ENCODE measurements at regions of chr2 and their contacts with region 1.

Region 1: GRCh38 chr2:234308813-234309195 is 188.1 kb downstream of the ARL4C start:
- DNase-seq: peak; percentile 91
- ATAC-seq: peak; percentile 92
- H3K4me3 ChIP-seq: no peak overlapping the region
- H3K4me3 Mint-ChIP-seq: peak overlapping the region; percentile 44
- H3K27ac ChIP-seq: no peak overlapping the region
- H3K27ac Mint-ChIP-seq: peak overlapping the region; percentile 26
- H3K4me1 ChIP-seq: peaks cover 24 to 26% of the 10 kb centered on the region in 2 donors
- H3K4me1 Mint-ChIP-seq: peaks cover 32% of the 10 kb centered on the region
- H3K27me3 ChIP-seq: peaks cover 0 to 39% (median 8%) of the 10 kb centered on the region in 4 experiments
- H3K27me3 Mint-ChIP-seq: peaks cover 32% of the 10 kb centered on the region
- CTCF ChIP-seq: no peak

Region 2: DNA sequence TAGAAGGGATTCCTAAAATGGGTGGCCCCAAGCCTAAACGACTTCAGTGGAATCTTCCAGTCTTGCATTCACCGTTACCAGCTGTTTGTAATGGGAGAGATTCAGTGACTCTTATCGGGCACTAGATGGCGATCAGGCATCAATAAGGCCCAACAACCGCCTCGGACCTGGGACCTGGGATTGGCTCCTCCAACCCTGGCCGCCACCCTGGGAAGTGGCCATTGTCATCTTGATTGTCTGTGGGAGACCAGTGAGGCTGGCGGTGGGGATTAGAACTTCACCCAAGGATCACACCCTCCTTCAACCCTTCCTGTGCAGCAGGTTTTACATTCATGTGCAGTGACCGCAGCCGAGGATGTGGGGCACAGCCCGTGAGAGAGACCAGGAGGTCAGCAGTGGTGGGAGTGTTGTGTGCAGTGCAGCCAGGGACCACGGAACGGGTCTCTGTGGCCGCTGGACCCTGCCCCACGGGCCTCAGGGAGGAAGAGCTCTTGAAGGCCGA is 173.0 kb before region 1 on chr2:
- CTCF ChIA-PET with region 1: interaction called, 6 read pairs
- POLR2A ChIA-PET with region 1: no interaction called
- intact Hi-C with region 1: loop called (anchors 2 kb)
- DNase-seq: peak; percentile 75
- ATAC-seq: peak; percentile 53
- H3K4me3 ChIP-seq: no peak overlapping the region
- H3K4me3 Mint-ChIP-seq: no peak overlapping the region
- H3K27ac ChIP-seq: no peak overlapping the region
- H3K27ac Mint-ChIP-seq: no peak overlapping the region
- H3K4me1 ChIP-seq: peaks cover 4 to 11% of the 10 kb centered on the region in 2 donors
- H3K4me1 Mint-ChIP-seq: peaks cover 15% of the 10 kb centered on the region
- H3K27me3 ChIP-seq: peaks cover 0 to 41% (median 17%) of the 10 kb centered on the region in 4 experiments
- H3K27me3 Mint-ChIP-seq: peaks cover 49% of the 10 kb centered on the region
- CTCF ChIP-seq: peak; percentile 86

Region 3: DNA sequence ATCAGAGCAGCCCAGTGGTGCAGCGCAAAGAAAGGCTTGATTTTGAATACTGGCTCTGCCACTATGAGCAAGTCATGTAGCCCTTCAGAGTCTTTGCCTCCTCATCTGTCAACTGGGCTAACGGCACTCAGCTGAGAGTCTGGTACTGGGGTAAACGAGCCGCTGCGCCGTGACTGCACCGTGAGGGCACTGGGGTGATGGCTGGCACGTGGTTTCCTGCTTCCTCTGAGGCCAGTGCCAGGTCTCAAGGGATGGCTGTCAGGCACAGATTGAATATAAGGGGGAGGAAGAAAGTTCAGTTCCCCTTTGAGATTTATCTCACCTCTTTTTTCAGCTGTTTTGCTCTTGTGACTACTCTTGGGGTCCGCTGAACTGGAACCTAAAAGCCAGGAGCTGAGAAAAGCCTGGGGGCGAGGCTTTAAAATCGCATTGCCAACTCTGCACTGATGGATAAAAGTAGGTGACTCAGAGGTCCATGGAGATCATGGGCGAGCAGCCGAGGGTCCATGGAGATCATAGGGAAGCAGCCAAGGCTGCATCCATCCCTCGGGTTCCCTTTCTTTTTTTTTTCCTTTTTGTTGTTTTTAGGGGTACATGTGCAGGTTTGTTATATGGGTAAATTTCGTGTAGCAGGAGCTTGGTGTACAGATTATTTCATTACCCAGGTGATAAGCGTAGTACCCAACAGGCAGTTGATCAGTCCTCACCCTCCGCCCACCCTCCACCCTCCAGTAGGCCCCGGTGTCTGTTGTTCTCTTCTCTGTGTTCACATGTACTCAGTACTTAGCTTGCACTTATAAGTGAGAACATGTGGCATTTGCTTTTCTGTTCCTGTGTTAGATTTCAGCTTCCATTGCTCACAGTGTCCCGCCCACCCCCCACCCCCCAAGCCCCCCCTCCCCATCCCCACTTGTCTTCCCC is 144.1 kb before region 1 on chr2:
- CTCF ChIA-PET with region 1: no interaction called
- POLR2A ChIA-PET with region 1: no interaction called
- intact Hi-C with region 1: loop called (anchors 1 kb)
- DNase-seq: peak; percentile 94
- ATAC-seq: peak; percentile 96
- H3K4me3 ChIP-seq: peak overlapping the region in 2 of 5 experiments; percentile 11 to 40
- H3K4me3 Mint-ChIP-seq: peak overlapping the region; percentile 71
- H3K27ac ChIP-seq: peak overlapping the region; percentile 87 to 88
- H3K27ac Mint-ChIP-seq: peak overlapping the region; percentile 89
- H3K4me1 ChIP-seq: peaks cover 45 to 54% of the 10 kb centered on the region in 2 donors
- H3K4me1 Mint-ChIP-seq: peaks cover 55% of the 10 kb centered on the region
- H3K27me3 ChIP-seq: peaks cover 0 to 8% (median 2%) of the 10 kb centered on the region in 4 experiments
- H3K27me3 Mint-ChIP-seq: peaks cover 9% of the 10 kb centered on the region
- CTCF ChIP-seq: no peak

Region 4: DNA sequence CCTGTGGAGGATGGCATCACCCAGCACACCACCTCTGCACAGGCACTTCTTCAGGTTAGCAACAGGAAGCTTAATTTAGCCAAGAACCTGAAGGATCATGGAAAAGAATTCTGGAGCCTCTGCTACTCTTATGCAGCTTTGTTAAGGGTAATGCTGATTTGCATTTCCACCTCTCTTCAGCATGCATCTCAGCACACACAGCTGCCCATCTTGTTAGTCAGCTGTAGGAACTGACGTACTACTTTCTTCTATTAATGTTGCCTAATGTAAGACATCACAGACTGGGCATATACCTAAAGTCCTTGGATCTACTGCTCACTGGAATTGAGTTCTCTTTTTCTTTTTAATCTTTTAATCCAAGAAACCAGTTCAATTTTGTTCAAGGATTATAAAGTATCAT is 77.3 kb before region 1 on chr2:
- CTCF ChIA-PET with region 1: no interaction called
- POLR2A ChIA-PET with region 1: no interaction called
- intact Hi-C with region 1: no loop called
- DNase-seq: no peak
- ATAC-seq: no peak
- H3K4me3 ChIP-seq: no peak overlapping the region
- H3K4me3 Mint-ChIP-seq: no peak overlapping the region
- H3K27ac ChIP-seq: no peak overlapping the region
- H3K27ac Mint-ChIP-seq: no peak overlapping the region
- H3K4me1 ChIP-seq: no peaks in the 10 kb centered on the region
- H3K4me1 Mint-ChIP-seq: no peaks in the 10 kb centered on the region
- H3K27me3 ChIP-seq: peaks cover 0 to 12% (median 0%) of the 10 kb centered on the region in 4 experiments
- H3K27me3 Mint-ChIP-seq: peaks cover 21% of the 10 kb centered on the region
- CTCF ChIP-seq: no peak

Region 5: GRCh38 chr2:234278556-234279255 is 30.1 kb before region 1 on chr2:
- CTCF ChIA-PET with region 1: no interaction called
- POLR2A ChIA-PET with region 1: no interaction called
- intact Hi-C with region 1: no loop called
- DNase-seq: no peak
- ATAC-seq: no peak
- H3K4me3 ChIP-seq: no peak overlapping the region
- H3K4me3 Mint-ChIP-seq: no peak overlapping the region
- H3K27ac ChIP-seq: no peak overlapping the region
- H3K27ac Mint-ChIP-seq: peak overlapping the region; percentile 21
- H3K4me1 ChIP-seq: no peaks in the 10 kb centered on the region
- H3K4me1 Mint-ChIP-seq: peaks cover 3% of the 10 kb centered on the region
- H3K27me3 ChIP-seq: peaks cover 0 to 28% (median 3%) of the 10 kb centered on the region in 4 experiments
- H3K27me3 Mint-ChIP-seq: peaks cover 54% of the 10 kb centered on the region
- CTCF ChIP-seq: no peak

Region 6: GRCh38 chr2:234425619-234426603 is 117.1 kb after region 1 on chr2:
- CTCF ChIA-PET with region 1: no interaction called
- POLR2A ChIA-PET with region 1: interaction called, 7 read pairs
- intact Hi-C with region 1: loop called (anchors 1 kb)
- DNase-seq: peak; percentile 94
- ATAC-seq: peak; percentile 92
- H3K4me3 ChIP-seq: peak overlapping the region in 2 of 5 experiments; percentile 5 to 37
- H3K4me3 Mint-ChIP-seq: peak overlapping the region; percentile 69
- H3K27ac ChIP-seq: peak overlapping the region; percentile 87
- H3K27ac Mint-ChIP-seq: peak overlapping the region; percentile 95
- H3K4me1 ChIP-seq: peaks cover 79 to 85% of the 10 kb centered on the region in 2 donors
- H3K4me1 Mint-ChIP-seq: peaks cover 73% of the 10 kb centered on the region
- H3K27me3 ChIP-seq: no peaks in the 10 kb centered on the region
- H3K27me3 Mint-ChIP-seq: no peaks in the 10 kb centered on the region
- CTCF ChIP-seq: no peak

Region 7: GRCh38 chr2:234446404-234447076 is 137.7 kb after region 1 on chr2:
- CTCF ChIA-PET with region 1: interaction called, 4 read pairs
- POLR2A ChIA-PET with region 1: no interaction called
- intact Hi-C with region 1: loop called (anchors 1 kb)
- DNase-seq: peak; percentile 95
- ATAC-seq: peak; percentile 93
- H3K4me3 ChIP-seq: peak overlapping the region in 1 of 5 experiments; percentile 11
- H3K4me3 Mint-ChIP-seq: peak overlapping the region; percentile 84
- H3K27ac ChIP-seq: peak overlapping the region; percentile 95 to 98
- H3K27ac Mint-ChIP-seq: peak overlapping the region; percentile 96
- H3K4me1 ChIP-seq: peaks cover 69 to 80% of the 10 kb centered on the region in 2 donors
- H3K4me1 Mint-ChIP-seq: peaks cover 78% of the 10 kb centered on the region
- H3K27me3 ChIP-seq: no peaks in the 10 kb centered on the region
- H3K27me3 Mint-ChIP-seq: no peaks in the 10 kb centered on the region
- CTCF ChIP-seq: no peak

Region 8: GRCh38 chr2:234483568-234484251 is 174.9 kb after region 1 on chr2:
- CTCF ChIA-PET with region 1: interaction called, 4 read pairs
- POLR2A ChIA-PET with region 1: no interaction called
- intact Hi-C with region 1: loop called (anchors 5 kb)
- DNase-seq: peak; percentile 90
- ATAC-seq: peak; percentile 87
- H3K4me3 ChIP-seq: peak overlapping the region in 1 of 5 experiments; percentile 27
- H3K4me3 Mint-ChIP-seq: peak overlapping the region; percentile 61
- H3K27ac ChIP-seq: peak overlapping the region; percentile 48 to 59
- H3K27ac Mint-ChIP-seq: peak overlapping the region; percentile 33
- H3K4me1 ChIP-seq: peaks cover 45 to 50% of the 10 kb centered on the region in 2 donors
- H3K4me1 Mint-ChIP-seq: peaks cover 41% of the 10 kb centered on the region
- H3K27me3 ChIP-seq: peaks cover 0 to 4% (median 0%) of the 10 kb centered on the region in 4 experiments
- H3K27me3 Mint-ChIP-seq: no peaks in the 10 kb centered on the region
- CTCF ChIP-seq: peak; percentile 71

Measured in B cell (primary cell).